ENCODE measurements at regions of chr5 and their contacts with region 1.

Region 1: DNA sequence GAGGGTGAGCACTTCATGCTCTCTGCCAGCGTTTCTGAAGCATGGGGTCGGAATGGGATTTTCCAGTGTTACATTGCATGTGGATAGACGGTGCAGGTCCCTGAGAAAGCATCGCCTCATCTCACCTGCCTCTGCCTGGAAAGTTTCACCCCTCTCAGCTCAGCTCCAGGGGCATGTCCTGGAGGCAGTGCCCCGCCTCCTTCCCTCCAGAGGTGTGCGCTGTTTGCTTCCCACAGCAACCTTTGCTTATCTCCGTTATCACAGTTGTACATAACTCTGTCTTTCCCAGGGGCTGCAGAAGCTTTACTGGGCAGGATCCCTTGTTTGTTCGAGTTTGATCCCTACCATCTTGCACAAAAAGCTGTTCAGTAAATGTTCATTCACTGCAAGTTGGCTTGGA is 10.7 kb upstream of the CREBRF start:
- DNase-seq: no peak
- ATAC-seq: peak in 3 of 4 donors; percentile 24 to 45 (median 28)
- H3K4me3 ChIP-seq: no peak overlapping the region
- H3K27ac ChIP-seq: no peak overlapping the region
- H3K4me1 ChIP-seq: no peaks in the 10 kb centered on the region
- H3K27me3 ChIP-seq: no peaks in the 10 kb centered on the region
- CTCF ChIP-seq: no peak
- POLR2A ChIP-seq: no peak

Region 2: GRCh38 chr5:172973127-172973916 is 72.2 kb before region 1 on chr5:
- intact Hi-C with region 1: no loop called
- DNase-seq: no peak
- ATAC-seq: no peak
- H3K4me3 ChIP-seq: no peak overlapping the region
- H3K27ac ChIP-seq: no peak overlapping the region
- H3K4me1 ChIP-seq: no peaks in the 10 kb centered on the region
- H3K27me3 ChIP-seq: no peaks in the 10 kb centered on the region
- CTCF ChIP-seq: no peak
- POLR2A ChIP-seq: no peak

Region 3: DNA sequence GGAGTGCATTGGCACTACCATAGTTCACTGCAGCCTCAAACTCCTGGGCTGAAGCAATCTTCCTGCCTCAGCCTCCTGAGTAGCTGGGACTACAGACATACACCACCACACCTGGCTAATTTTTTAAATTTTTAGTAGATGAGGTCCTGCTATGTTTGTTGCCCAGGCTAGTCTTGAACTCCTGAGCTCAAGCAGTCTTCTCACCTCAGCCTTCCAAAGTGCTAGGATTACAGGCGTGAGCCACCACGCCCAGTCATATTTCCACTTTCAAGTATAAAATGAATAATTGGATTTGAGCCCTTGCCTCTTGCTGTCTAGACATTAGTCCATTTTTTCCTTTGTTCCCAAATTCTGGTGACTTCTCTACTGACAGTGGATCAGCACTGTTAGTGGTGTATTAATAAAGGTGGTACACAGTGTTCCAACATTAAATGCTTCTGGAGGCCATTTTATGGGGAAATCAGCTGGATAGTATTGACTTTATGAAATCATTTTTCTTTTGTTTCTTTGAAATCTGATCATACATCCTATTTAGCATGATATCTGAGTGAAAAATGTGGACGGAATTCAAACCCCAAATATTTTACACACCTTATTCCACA is 46.0 kb before region 1 on chr5:
- intact Hi-C with region 1: loop called in 1 of 2 experiments (anchors 10 kb)
- DNase-seq: no peak
- ATAC-seq: peak in 1 of 4 donors; percentile 17
- H3K4me3 ChIP-seq: no peak overlapping the region
- H3K27ac ChIP-seq: peak overlapping the region in 1 of 3 donors; percentile 15
- H3K4me1 ChIP-seq: peaks cover 0 to 16% (median 0%) of the 10 kb centered on the region in 4 donors
- H3K27me3 ChIP-seq: no peaks in the 10 kb centered on the region
- CTCF ChIP-seq: no peak
- POLR2A ChIP-seq: no peak

Region 4: GRCh38 chr5:173217626-173218397 is 172.3 kb after region 1 on chr5:
- intact Hi-C with region 1: no loop called
- DNase-seq: no peak
- ATAC-seq: peak in 2 of 4 donors; percentile 19 to 39
- H3K4me3 ChIP-seq: no peak overlapping the region
- H3K27ac ChIP-seq: no peak overlapping the region
- H3K4me1 ChIP-seq: no peaks in the 10 kb centered on the region
- H3K27me3 ChIP-seq: no peaks in the 10 kb centered on the region
- CTCF ChIP-seq: no peak
- POLR2A ChIP-seq: no peak

Measured in right lobe of liver (tissue), 6 donors.